Sciatic nerve (tissue), 2 donors: ENCODE measurements at regions of chr13 and their contacts with region 1.

Region 1: DNA sequence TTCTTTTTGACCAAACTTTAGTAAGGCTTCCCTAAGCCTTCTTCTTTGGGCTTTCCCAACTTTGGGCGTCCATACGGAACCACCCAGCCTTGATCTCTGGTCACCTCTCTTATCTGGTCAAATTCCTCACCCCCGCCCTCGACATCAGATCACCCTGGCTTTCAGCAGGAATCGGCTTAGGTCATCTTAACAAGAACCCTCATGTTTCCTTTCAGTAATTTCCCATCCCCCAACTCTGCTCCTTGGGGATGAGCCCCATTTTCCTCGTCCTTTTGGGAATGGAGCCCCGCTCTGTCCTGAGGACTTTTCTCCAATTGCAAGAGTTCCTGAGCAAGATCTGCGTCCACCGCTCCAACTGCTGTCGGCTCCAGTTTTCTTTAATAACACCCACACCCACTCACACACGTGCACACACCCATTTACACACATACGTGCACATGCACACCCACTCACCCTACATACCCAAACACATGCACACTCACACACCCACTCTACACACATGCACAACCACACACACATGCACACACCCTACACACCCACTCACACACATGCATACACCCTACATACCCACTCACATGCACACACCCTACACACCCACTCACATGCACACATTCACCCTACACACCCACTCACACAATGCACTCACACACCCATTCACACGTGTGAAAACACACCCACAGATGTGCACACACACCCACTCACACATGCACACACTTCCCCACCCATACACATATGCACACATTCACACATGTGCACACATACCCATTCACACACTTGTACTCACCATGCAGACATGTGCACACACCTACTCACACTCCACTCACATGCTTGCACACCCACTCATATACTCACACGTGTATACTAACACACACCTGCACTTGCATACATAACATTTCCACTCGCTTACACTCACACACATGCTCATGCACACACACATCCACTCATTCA is 87.0 kb upstream of the TM9SF2 start:
- DNase-seq: no peak
- ATAC-seq: no peak

Region 2: DNA sequence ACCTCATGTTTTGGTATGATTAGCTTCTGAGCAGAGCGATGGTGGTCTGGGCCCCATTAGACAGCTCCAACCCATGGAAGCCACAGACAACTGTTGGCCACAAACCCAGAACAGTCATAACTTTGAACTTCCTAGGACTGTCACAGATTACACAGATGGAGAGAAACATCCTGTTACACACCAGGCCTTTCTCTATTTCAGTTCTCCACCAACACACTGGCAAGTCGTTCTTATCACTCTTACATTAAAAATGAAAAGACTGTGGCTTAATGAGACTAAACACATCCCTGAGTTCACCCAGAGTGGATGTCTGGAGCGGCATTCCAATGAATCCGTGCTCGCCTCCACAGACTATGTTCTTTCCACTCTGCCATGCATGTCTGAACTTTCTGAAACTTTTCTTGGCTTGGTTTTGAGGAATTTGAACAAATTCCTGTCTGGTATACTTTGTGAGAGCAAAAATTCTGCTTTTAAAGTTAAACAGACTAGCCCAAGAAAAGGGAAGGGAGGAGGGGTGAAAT is 1892.9 kb after region 1 on chr13:
- intact Hi-C with region 1: loop called (anchors 5 kb)
- DNase-seq: no peak
- ATAC-seq: no peak